PC-3 (cell line): ENCODE measurements at regions of chr19 and their contacts with region 1.

Region 1: DNA sequence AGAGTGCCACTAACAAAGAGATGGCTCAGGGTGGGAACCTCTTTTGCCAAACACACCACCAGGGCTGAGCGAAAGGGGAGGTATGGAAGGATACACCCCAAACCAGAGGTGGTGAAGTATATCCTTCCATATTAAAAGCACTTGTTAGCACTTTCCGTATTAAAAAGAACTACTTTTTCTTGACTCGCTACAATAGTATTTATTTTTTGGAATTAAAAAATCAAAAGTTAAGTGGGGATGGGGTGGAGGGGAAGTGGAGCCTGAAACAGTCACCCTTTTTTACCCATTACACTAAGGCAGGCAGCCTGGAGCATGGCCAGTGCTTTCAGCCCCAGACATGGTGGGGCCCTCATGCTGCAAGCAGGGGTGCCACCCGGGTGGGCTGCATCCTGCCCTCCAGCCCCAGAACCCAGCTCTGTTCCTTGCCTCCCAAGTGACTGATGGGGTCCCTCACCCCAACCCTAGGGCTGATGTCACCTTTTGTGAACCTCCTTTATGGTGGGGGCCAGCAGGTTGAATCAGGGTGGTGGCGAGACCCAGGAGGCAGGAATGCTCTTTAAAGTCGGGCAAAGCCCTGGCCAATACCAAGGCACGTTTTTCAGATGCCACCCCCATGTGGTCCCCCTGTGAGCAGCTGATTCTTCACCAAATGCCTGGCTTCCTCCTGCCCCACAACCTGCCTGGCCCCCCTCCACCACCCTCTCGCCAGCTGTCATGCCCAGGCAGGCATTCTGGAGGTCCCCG is 31.0 kb downstream of the LYL1 start:
- DNase-seq: no peak
- ATAC-seq: no peak
- H3K4me3 ChIP-seq: no peak overlapping the region
- H3K27ac ChIP-seq: no peak overlapping the region
- H3K4me1 ChIP-seq: no peaks in the 10 kb centered on the region
- H3K27me3 ChIP-seq: no peaks in the 10 kb centered on the region
- CTCF ChIP-seq: no peak

Region 2: DNA sequence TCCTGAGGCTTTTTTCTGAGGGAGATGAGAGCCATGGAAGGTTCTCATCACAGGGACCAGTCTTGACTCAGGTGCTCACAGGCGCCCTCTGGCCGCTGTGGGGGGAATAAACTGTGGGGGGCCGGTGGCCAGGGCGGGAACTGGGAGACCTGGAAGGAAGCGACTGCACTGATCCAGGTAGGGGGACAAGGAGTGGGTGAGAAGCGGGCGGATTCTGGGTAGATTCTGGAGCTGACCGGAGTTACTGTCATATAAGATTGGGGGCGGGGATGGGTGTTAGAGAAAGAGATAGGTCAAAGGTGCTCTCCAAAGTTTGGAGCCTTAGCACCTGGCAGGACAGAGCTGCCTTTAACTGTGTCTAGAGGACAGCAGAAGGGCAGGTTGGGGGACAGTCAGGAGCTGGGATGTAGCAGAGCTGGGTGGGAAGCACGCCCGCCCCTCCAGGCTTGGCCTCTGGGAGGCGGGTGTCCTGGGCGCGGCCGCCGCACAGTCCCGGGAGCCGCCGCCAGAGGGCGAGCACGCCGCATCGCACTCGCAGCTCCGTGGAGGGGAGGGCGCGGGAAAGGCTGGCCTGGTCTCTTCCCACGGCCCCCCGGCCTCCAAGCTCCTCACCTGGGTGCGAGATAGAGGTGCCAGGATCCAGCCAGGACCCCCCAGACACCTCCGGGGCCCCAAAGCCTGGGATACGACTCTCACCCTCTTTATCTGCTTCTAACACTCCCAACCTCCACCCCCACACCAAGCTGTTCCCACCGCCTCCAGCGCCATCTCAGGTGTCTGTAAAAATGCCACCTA is 106.4 kb before region 1 on chr19:
- CTCF ChIA-PET with region 1: no interaction called
- POLR2A ChIA-PET with region 1: interaction called, 10 read pairs
- intact Hi-C with region 1: no loop called
- DNase-seq: peak; percentile 89
- ATAC-seq: peak; percentile 97
- H3K4me3 ChIP-seq: peak overlapping the region; percentile 66
- H3K27ac ChIP-seq: peak overlapping the region; percentile 27
- H3K4me1 ChIP-seq: peaks cover 3% of the 10 kb centered on the region; the same call in 1 of the 2 replicates
- H3K27me3 ChIP-seq: no peaks in the 10 kb centered on the region
- CTCF ChIP-seq: peak; percentile 93

Region 3: DNA sequence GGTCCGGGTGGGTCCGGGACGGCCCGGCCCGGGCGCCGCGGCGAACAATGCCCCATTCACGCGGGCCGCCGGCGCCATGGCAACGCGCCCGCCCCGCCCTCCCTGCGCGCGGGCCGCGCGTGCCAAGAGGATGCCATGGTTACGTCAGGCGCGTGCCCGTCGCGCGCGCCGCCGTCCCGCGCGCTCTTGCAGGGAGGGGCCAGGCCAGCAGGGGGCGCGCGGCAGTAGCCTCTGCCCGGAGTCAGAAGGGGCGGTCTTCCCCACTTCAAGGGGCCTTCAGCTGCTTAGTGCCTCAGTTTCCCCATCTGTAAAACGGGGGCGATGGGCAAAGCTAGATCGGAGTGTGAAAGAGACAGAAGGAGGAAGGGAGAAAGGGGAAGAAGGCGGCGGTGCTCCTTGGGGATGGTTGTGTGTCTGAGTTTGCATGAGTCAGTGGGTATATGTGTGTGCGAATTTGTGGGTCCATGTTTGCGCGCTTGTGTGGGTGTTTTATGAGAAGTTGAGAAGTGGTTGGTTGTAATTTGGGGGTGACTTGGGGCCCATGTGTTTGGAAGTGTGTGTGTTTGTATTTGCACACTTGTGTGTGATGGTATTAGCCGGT is 88.0 kb before region 1 on chr19:
- CTCF ChIA-PET with region 1: no interaction called
- POLR2A ChIA-PET with region 1: no interaction called
- intact Hi-C with region 1: no loop called
- DNase-seq: peak; percentile 89
- ATAC-seq: peak; percentile 84
- H3K4me3 ChIP-seq: peak overlapping the region; percentile 61
- H3K27ac ChIP-seq: no peak overlapping the region
- H3K4me1 ChIP-seq: no peaks in the 10 kb centered on the region
- H3K27me3 ChIP-seq: no peaks in the 10 kb centered on the region
- CTCF ChIP-seq: peak; percentile 94

Region 4: DNA sequence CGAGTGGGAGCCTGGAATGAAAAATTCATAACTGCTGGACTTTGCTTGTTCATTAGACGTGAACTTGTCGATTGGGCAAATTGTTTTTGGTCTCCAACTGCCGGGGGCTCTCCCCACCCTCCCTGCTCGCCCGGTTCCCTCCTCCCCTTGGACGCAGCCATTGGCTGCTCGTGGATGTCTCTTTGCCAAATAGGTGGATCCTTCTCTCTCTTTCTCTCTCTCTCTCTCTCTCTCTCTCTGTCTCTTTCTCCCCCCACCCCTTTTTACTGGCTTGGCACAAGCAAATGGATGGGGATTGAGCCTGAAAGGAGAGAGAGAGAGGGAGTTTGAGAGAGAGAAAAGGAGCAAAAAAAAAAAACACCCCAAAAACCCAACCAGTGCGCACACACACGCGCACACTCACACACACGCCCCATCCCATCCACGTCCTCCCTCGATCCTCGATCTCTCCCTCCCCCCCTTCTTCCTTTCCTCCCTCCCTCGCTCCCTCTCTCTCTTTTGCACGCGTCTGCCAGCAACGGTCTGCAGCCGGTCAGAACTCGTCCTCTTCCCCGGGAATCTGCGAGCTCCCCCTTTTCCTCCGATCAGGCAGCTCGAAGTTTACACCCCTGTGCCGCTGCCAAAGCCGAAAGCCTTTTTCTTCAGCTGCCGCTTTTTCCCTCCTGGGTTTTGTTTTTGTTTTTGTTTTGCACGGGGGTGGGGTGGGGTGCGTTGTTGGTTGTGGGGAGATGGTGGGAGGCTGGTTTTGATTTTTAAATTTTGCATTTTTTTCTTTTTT is 48.6 kb before region 1 on chr19:
- CTCF ChIA-PET with region 1: no interaction called
- POLR2A ChIA-PET with region 1: no interaction called
- intact Hi-C with region 1: no loop called
- DNase-seq: peak; percentile 94
- ATAC-seq: peak; percentile 39
- H3K4me3 ChIP-seq: peak overlapping the region; percentile 82
- H3K27ac ChIP-seq: peak overlapping the region; percentile 68
- H3K4me1 ChIP-seq: peaks cover 67% of the 10 kb centered on the region
- H3K27me3 ChIP-seq: no peaks in the 10 kb centered on the region
- CTCF ChIP-seq: no peak

Region 5: GRCh38 chr19:14419106-14419813 is 1347.6 kb after region 1 on chr19 and contains the start of gene DDX39A:
- CTCF ChIA-PET with region 1: no interaction called
- POLR2A ChIA-PET with region 1: interaction called, 13 read pairs
- intact Hi-C with region 1: no loop called
- DNase-seq: peak; percentile 100
- ATAC-seq: peak; percentile 98
- H3K4me3 ChIP-seq: peak within 1 kb of the TSS; percentile 98
- H3K27ac ChIP-seq: peak within 1 kb of the TSS; percentile 83
- H3K4me1 ChIP-seq: peaks cover 23% of the 10 kb centered on the region
- H3K27me3 ChIP-seq: no peaks in the 10 kb centered on the region
- CTCF ChIP-seq: no peak
- total RNA-seq, gene DDX39A: 308 and 311 TPM in 2 replicates